Activated naive CD4-positive, alpha-beta T cell treated with anti-CD3 and anti-CD28 coated beads for 36 hours (primary cell): ENCODE measurements at regions of chr2 and their contacts with region 1.

Region 1: GRCh38 chr2:84999553-84999955 is 28.6 kb downstream of the KCMF1 start:
- DNase-seq: no peak
- H3K4me3 Mint-ChIP-seq: peak overlapping the region; percentile 53
- H3K27ac Mint-ChIP-seq: peak overlapping the region; percentile 97
- H3K4me1 Mint-ChIP-seq: peaks cover 79% of the 10 kb centered on the region
- H3K27me3 Mint-ChIP-seq: no peaks in the 10 kb centered on the region

Region 2: GRCh38 chr2:84817239-84817655 is 182.3 kb before region 1 on chr2:
- CTCF ChIA-PET with region 1: no interaction called
- intact Hi-C with region 1: loop called (anchors 5 kb)
- DNase-seq: peak; percentile 35
- H3K4me3 Mint-ChIP-seq: no peak overlapping the region
- H3K27ac Mint-ChIP-seq: peak overlapping the region; percentile 57
- H3K4me1 Mint-ChIP-seq: peaks cover 41% of the 10 kb centered on the region
- H3K27me3 Mint-ChIP-seq: no peaks in the 10 kb centered on the region

Region 3: GRCh38 chr2:84939426-84940087 is 60.0 kb before region 1 on chr2:
- CTCF ChIA-PET with region 1: interaction called, 5 read pairs
- intact Hi-C with region 1: loop called (anchors 1 kb)
- DNase-seq: peak; percentile 78
- H3K4me3 Mint-ChIP-seq: peak overlapping the region; percentile 72
- H3K27ac Mint-ChIP-seq: peak overlapping the region; percentile 99
- H3K4me1 Mint-ChIP-seq: peaks cover 75% of the 10 kb centered on the region
- H3K27me3 Mint-ChIP-seq: no peaks in the 10 kb centered on the region

Region 4: DNA sequence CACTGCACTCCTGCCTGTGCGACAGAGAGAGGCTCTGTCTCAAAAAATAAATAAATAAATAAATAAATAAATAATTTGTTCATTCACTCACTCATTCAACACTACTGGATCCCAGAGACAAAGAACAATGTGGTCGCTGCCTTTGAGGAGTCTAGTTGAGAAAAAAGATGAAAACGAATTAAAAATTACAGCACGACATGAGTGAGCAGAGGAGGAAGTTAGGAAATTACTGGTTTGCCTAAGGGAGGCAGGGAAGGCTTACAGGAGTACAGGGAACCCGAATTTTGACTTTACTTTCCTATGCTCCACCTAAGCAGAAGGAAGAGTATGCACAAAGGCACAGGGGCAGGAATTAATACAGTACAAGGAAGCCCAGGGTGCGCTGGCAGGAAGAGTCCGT is 32.8 kb before region 1 on chr2:
- CTCF ChIA-PET with region 1: no interaction called
- intact Hi-C with region 1: no loop called
- DNase-seq: no peak
- H3K4me3 Mint-ChIP-seq: peak overlapping the region; percentile 42
- H3K27ac Mint-ChIP-seq: peak overlapping the region; percentile 68
- H3K4me1 Mint-ChIP-seq: peaks cover 45% of the 10 kb centered on the region
- H3K27me3 Mint-ChIP-seq: no peaks in the 10 kb centered on the region

Region 5: GRCh38 chr2:84989422-84989821 is 10.1 kb before region 1 on chr2:
- CTCF ChIA-PET with region 1: interaction called, 3 read pairs
- intact Hi-C with region 1: loop called (anchors 1 kb)
- DNase-seq: no peak
- H3K4me3 Mint-ChIP-seq: no peak overlapping the region
- H3K27ac Mint-ChIP-seq: no peak overlapping the region
- H3K4me1 Mint-ChIP-seq: peaks cover 45% of the 10 kb centered on the region
- H3K27me3 Mint-ChIP-seq: no peaks in the 10 kb centered on the region

Region 6: GRCh38 chr2:85017411-85018048 is 18.0 kb after region 1 on chr2:
- CTCF ChIA-PET with region 1: interaction called, 42 read pairs
- intact Hi-C with region 1: no loop called
- DNase-seq: no peak
- H3K4me3 Mint-ChIP-seq: no peak overlapping the region
- H3K27ac Mint-ChIP-seq: peak overlapping the region; percentile 66
- H3K4me1 Mint-ChIP-seq: peaks cover 72% of the 10 kb centered on the region
- H3K27me3 Mint-ChIP-seq: no peaks in the 10 kb centered on the region

Region 7: DNA sequence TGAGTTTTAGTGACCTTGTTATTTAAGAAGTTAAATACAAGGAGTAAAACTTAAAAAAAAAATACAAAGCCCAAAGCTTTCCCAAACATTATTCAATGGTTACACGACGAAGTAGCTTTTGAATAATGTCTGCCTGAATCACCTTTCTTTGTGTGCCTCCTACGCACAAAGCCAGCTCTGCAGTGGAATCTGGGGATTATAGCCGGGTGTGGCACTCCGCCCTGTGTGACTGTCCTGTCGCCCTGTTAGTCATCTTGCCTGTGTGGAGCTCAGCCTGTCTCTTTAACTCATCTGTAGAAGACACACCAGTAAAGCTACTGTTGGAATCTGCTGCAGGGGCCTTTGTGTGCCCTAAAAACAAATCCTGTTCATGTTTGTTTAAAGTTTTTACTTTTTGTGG is 54.2 kb after region 1 on chr2:
- CTCF ChIA-PET with region 1: no interaction called
- intact Hi-C with region 1: no loop called
- DNase-seq: no peak
- H3K4me3 Mint-ChIP-seq: no peak overlapping the region
- H3K27ac Mint-ChIP-seq: no peak overlapping the region
- H3K4me1 Mint-ChIP-seq: peaks cover 33% of the 10 kb centered on the region
- H3K27me3 Mint-ChIP-seq: no peaks in the 10 kb centered on the region

Region 8: GRCh38 chr2:85106507-85107215 is 107.1 kb after region 1 on chr2:
- CTCF ChIA-PET with region 1: no interaction called
- intact Hi-C with region 1: no loop called
- DNase-seq: no peak
- H3K4me3 Mint-ChIP-seq: no peak overlapping the region
- H3K27ac Mint-ChIP-seq: no peak overlapping the region
- H3K4me1 Mint-ChIP-seq: no peaks in the 10 kb centered on the region
- H3K27me3 Mint-ChIP-seq: peaks cover 3% of the 10 kb centered on the region